ENCODE measurements at regions of chr2 and their contacts with region 1.

Region 1: GRCh38 chr2:108835040-108835439 is 48.5 kb downstream of the CCDC138 start:
- DNase-seq: no peak
- H3K4me3 Mint-ChIP-seq: no peak overlapping the region
- H3K27ac Mint-ChIP-seq: peak overlapping the region; percentile 24
- H3K4me1 Mint-ChIP-seq: peaks cover 18% of the 10 kb centered on the region
- H3K27me3 Mint-ChIP-seq: no peaks in the 10 kb centered on the region

Region 2: DNA sequence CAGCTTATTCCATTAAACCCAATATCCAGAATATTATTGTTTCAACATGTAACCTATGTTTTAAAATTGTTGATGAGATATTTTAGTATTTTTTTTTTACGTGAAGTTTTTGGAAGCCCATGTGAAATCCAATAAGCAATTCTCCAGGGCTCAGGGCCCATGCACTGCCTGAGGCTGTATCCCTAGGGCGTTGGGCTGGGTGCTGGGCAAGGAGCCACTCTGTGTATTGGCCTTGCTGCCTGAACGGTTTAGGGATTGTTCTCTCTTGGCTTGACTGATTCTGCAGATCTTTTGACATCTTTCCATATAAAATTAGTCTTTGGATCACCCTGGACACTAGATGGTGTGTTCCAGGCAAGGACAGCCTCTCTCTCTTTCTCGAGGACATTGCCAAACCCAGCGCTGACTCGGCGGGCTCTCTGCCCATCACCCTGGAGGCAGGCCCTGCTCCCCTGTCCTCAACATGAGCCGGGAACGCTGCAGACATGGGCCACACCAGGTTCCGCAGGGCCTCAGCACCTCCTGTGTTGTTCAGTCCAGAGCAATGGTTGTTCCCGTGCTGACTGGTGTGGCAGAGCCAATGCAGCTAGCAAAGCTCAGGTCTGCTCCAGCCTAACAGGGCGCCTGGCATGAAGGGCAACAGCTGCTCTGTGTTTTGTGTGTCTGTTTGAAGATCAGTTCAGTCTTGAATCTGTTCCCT is 615.7 kb after region 1 on chr2:
- CTCF ChIA-PET with region 1: no interaction called
- intact Hi-C with region 1: loop called (anchors 5 kb)
- DNase-seq: no peak
- H3K4me3 Mint-ChIP-seq: no peak overlapping the region
- H3K27ac Mint-ChIP-seq: no peak overlapping the region
- H3K4me1 Mint-ChIP-seq: peaks cover 10% of the 10 kb centered on the region
- H3K27me3 Mint-ChIP-seq: no peaks in the 10 kb centered on the region

Measured in activated naive CD4-positive, alpha-beta T cell treated with anti-CD3 and anti-CD28 coated beads for 36 hours (primary cell).